Dendritic cell treated with granulocyte-macrophage colony-stimulating factor and Interleukin-4, amounts not matched to agents 40 ng/mL and 50 ng/mL, for 4 days (primary cell): ENCODE measurements at regions of chr3 and their contacts with region 1.

Region 1: GRCh38 chr3:120753831-120754230 is 11.3 kb downstream of the GTF2E1 start:
- H3K4me3 Mint-ChIP-seq: no peak overlapping the region
- H3K27ac Mint-ChIP-seq: no peak overlapping the region
- H3K4me1 Mint-ChIP-seq: peaks cover 19% of the 10 kb centered on the region
- H3K27me3 Mint-ChIP-seq: no peaks in the 10 kb centered on the region

Region 2: GRCh38 chr3:119388577-119388976 is 1365.3 kb before region 1 on chr3:
- intact Hi-C with region 1: no loop called
- H3K4me3 Mint-ChIP-seq: no peak overlapping the region
- H3K27ac Mint-ChIP-seq: no peak overlapping the region
- H3K4me1 Mint-ChIP-seq: no peaks in the 10 kb centered on the region
- H3K27me3 Mint-ChIP-seq: no peaks in the 10 kb centered on the region

Region 3: DNA sequence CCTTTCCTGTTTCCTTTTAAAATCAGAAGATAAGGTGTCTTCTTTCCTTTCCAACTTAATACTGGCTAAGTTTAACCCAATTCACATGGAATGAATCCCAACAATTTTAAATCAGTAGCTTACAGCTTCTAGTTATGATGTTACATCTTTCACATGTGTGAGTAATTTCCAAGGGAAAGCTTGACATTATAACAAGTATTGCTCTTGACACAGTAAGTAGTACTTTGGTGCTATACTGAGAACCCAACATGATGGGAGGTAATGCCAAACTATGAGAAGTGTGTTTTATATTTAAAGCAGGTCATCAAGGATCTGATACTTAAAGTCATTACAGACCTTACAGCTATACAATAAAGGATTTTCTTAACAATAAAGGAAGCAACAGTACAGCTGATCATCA is 40.6 kb before region 1 on chr3:
- intact Hi-C with region 1: no loop called
- H3K4me3 Mint-ChIP-seq: no peak overlapping the region
- H3K27ac Mint-ChIP-seq: no peak overlapping the region
- H3K4me1 Mint-ChIP-seq: no peaks in the 10 kb centered on the region
- H3K27me3 Mint-ChIP-seq: no peaks in the 10 kb centered on the region

Region 4: DNA sequence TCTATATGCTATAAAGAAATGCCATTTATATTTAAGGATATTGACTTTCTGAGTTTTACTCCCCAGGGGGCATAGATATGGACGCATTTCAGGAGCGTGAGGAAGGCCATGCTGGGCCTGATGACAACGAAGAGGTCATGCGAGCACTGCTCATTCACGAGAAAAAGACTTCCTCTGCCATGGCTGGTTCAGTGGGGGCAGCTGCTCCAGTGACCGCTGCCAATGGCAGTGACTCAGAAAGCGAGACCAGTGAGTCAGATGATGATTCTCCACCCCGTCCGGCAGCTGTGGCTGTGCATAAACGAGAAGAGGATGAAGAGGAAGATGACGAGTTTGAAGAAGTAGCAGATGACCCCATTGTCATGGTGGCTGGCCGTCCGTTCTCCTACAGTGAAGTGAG is 27.1 kb after region 1 on chr3:
- intact Hi-C with region 1: loop called (anchors 5 kb)
- H3K4me3 Mint-ChIP-seq: peak overlapping the region; percentile 54
- H3K27ac Mint-ChIP-seq: peak overlapping the region; percentile 83
- H3K4me1 Mint-ChIP-seq: peaks cover 11% of the 10 kb centered on the region
- H3K27me3 Mint-ChIP-seq: no peaks in the 10 kb centered on the region

Region 5: DNA sequence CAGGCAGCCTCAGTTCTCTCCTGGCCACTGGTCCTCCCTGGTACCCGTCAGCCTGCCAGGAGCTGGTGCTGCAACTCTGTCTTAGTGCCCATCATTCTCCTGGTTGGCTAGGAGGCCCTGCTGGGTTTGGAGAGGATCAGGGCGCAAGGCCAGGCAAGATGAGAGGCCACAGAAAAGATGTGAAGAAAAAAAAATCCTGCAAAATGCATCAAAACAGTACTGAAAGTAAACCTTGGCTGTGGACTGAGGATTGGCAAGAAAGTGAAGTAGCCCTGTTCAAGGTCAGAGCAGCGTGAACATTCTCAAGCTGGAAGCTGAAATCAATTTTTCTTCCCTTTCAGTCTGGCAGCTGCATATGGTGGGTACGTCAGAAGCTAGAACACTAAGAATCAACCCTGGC is 62.9 kb after region 1 on chr3:
- intact Hi-C with region 1: no loop called
- H3K4me3 Mint-ChIP-seq: no peak overlapping the region
- H3K27ac Mint-ChIP-seq: no peak overlapping the region
- H3K4me1 Mint-ChIP-seq: no peaks in the 10 kb centered on the region
- H3K27me3 Mint-ChIP-seq: peaks cover 9% of the 10 kb centered on the region

Region 6: GRCh38 chr3:121232309-121233225 is 478.7 kb after region 1 on chr3:
- intact Hi-C with region 1: no loop called
- H3K4me3 Mint-ChIP-seq: no peak overlapping the region
- H3K27ac Mint-ChIP-seq: no peak overlapping the region
- H3K4me1 Mint-ChIP-seq: no peaks in the 10 kb centered on the region
- H3K27me3 Mint-ChIP-seq: no peaks in the 10 kb centered on the region